Kidney (tissue), 22 donors: ENCODE measurements at regions of chr3 and their contacts with region 1.

Region 1: GRCh38 chr3:113287803-113288648 is 76.7 kb downstream of the BOC start:
- DNase-seq: peak in 4 of 5 donors; percentile 74 to 87 (median 82)
- H3K4me3 ChIP-seq: no peak overlapping the region
- H3K27ac ChIP-seq: no peak overlapping the region
- H3K4me1 ChIP-seq: no peaks in the 10 kb centered on the region
- H3K27me3 ChIP-seq: no peaks in the 10 kb centered on the region
- CTCF ChIP-seq: peak; percentile 100

Region 2: DNA sequence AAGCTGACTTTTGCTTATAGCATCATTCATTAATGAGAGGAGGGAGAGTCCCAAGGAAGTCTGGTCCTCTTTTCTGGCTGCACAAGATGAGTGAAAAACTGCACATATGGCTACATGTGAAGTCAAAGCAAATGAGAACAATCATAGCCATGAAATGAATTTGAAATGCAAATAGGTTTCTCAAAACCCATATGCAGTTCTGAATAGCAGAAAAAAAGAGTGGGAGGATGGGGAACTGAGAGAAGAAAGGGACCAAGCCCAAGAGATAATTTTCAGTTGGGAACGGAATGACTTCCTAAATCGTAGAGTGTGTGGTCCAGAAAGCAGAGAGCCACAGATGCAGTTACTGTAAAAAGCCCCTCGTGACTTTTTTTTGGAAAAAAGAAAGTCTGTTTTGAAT is 230.9 kb before region 1 on chr3:
- intact Hi-C with region 1: loop called (anchors 5 kb)
- DNase-seq: no peak
- H3K4me3 ChIP-seq: no peak overlapping the region
- H3K27ac ChIP-seq: no peak overlapping the region
- H3K4me1 ChIP-seq: no peaks in the 10 kb centered on the region
- H3K27me3 ChIP-seq: no peaks in the 10 kb centered on the region
- CTCF ChIP-seq: no peak

Region 3: GRCh38 chr3:113136071-113136470 is 152.0 kb before region 1 on chr3:
- intact Hi-C with region 1: loop called (anchors 10 kb)
- DNase-seq: peak in 1 of 5 donors; percentile 64
- H3K4me3 ChIP-seq: no peak overlapping the region
- H3K27ac ChIP-seq: no peak overlapping the region
- H3K4me1 ChIP-seq: no peaks in the 10 kb centered on the region
- H3K27me3 ChIP-seq: no peaks in the 10 kb centered on the region
- CTCF ChIP-seq: peak; percentile 65

Region 4: DNA sequence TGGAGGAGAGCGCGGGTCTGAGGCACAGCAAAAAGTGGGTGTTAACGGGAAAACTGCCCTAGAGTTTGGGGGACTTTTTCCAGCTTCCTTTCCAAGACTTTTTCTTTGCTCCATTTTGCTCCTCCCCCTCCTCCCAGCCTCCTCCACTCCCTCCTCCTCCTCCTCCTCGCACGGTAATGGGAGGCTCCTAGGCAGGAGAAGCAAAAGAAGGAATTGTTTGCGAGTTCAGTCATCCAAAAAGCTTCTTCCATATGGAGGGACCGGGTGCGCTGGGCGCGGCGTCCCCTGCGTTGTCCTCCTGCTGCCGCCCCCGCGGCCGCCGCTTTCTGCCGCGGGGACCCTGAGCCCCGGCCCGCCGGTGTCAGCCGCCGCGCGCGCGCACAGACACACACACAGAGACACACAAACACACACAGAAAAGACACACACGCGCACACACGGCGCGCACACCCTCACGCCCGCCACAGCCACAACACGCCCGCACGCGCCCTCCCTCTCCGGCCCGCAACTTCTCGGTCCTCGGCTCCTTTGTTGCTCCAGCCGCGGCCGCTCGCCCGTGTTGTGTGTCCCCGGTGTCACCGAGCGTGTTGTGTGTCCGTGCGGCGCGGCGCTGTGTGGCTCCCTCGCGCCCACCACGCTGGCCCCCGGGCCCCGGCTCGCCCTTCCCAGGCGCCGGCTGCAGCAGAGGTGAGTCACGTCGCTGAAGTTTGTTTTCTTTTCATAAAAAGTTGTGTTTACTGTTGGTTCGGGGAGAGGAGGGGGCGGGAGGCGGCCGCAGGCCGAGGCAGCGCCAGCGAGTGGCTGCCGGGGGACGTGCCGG is 76.5 kb before region 1 on chr3 and contains the start of gene BOC:
- intact Hi-C with region 1: no loop called
- DNase-seq: peak; percentile 81 to 95 (median 84)
- H3K4me3 ChIP-seq: peak within 1 kb of the TSS; percentile 83 to 92 (median 83)
- H3K27ac ChIP-seq: peak within 1 kb of the TSS; percentile 78 to 85
- H3K4me1 ChIP-seq: peaks cover 0 to 4% (median 0%) of the 10 kb centered on the region in 3 donors
- H3K27me3 ChIP-seq: no peaks in the 10 kb centered on the region
- CTCF ChIP-seq: no peak
- total RNA-seq, gene BOC: 22.2 TPM